Stomach (tissue), 19 donors: ENCODE measurements at regions of chr6 and their contacts with region 1.

Region 1: DNA sequence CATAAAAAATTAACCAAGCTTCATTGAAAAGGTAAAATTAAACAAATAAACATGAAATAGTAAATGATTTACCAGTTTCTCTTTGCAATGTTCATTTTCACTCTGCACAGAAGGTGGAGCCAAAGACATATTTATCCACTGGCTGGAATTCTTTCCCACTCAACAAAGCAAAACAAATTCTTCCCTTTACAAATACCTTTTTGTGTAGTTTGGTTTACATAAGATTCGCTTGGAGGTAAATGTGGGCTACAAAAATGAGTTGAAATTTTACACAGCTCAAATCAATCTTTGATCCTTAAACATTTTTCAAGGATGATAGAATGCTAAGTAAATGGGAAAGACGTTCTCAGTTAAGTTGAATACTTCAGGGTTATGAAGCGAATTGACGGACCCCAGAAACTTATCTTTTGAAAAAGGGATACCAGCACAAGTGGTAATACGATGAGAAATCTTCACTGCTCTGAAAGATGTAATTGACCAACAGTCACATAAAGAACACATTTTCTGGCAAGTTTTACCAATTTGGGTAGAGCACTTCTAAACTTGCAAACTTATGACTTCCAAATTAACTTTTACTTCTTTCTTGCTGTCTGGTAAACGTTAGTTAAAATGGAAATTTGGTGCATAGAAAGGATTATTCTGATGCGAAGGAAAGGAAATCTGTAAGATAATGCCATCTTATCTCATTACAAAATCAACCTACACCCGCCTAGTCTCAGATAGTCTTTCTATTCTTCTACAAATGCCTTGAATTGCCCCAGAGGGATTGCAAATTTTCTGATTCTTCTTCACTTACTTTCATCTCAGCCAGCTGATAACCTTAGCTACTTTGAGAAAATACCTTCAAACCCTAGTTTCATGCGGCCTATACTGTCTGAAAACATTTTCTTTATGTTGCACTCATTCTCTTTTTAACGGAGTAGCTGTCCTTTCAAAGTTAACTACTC is 4.7 kb upstream of the GJA1 start:
- DNase-seq: peak in 1 of 2 donors; percentile 78
- H3K4me3 ChIP-seq: no peak overlapping the region
- H3K27ac ChIP-seq: no peak overlapping the region
- H3K4me1 ChIP-seq: peaks cover 0 to 21% (median 6%) of the 10 kb centered on the region in 4 donors
- H3K27me3 ChIP-seq: no peaks in the 10 kb centered on the region
- CTCF ChIP-seq: peak in 5 of 7 experiments; percentile 30 to 66 (median 50)
- EP300 ChIP-seq: no peak
- POLR2A ChIP-seq: no peak

Region 2: GRCh38 chr6:121571455-121571854 is 140.7 kb after region 1 on chr6:
- intact Hi-C with region 1: no loop called
- DNase-seq: no peak
- H3K4me3 ChIP-seq: no peak overlapping the region
- H3K27ac ChIP-seq: no peak overlapping the region
- H3K4me1 ChIP-seq: no peaks in the 10 kb centered on the region
- H3K27me3 ChIP-seq: no peaks in the 10 kb centered on the region
- CTCF ChIP-seq: no peak
- EP300 ChIP-seq: no peak
- POLR2A ChIP-seq: no peak

Region 3: DNA sequence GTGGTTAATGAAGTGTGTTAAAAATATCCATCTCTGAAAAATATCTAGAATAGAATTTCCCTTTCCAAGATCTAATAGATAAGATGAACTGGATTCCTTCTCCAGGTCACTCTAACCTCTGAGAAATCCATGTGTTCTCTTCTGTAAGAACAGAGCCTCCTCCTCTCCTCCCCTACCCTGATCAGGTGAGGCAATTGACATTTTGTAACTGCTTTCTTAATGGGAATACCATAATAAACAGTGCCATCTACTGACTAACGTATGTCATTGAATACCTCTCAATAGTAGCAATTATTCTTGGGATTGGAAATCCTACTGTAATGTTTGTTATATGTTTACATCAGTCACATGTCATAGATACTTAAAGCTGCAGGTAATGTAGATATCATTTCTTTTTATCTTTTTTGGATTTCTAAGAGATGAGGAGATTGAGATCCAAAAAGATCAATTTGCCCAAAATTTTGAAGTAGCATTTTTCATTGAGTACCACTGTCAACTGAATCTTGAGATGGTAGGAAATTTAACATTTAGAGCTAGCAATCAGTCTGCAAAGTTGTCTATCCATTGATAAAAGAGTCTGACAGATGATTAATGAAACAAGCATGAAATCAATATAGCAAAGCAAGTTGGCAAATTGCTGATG is 602.9 kb after region 1 on chr6:
- intact Hi-C with region 1: loop called (anchors 10 kb)
- DNase-seq: peak in 1 of 2 donors; percentile 74
- H3K4me3 ChIP-seq: no peak overlapping the region
- H3K27ac ChIP-seq: no peak overlapping the region
- H3K4me1 ChIP-seq: peaks cover 0 to 4% (median 0%) of the 10 kb centered on the region in 4 donors
- H3K27me3 ChIP-seq: no peaks in the 10 kb centered on the region
- CTCF ChIP-seq: peak in 5 of 7 experiments; percentile 5 to 72 (median 41)
- EP300 ChIP-seq: no peak
- POLR2A ChIP-seq: no peak